RWPE1 (cell line): ENCODE measurements at regions of chr19 and their contacts with region 1.

Region 1: DNA sequence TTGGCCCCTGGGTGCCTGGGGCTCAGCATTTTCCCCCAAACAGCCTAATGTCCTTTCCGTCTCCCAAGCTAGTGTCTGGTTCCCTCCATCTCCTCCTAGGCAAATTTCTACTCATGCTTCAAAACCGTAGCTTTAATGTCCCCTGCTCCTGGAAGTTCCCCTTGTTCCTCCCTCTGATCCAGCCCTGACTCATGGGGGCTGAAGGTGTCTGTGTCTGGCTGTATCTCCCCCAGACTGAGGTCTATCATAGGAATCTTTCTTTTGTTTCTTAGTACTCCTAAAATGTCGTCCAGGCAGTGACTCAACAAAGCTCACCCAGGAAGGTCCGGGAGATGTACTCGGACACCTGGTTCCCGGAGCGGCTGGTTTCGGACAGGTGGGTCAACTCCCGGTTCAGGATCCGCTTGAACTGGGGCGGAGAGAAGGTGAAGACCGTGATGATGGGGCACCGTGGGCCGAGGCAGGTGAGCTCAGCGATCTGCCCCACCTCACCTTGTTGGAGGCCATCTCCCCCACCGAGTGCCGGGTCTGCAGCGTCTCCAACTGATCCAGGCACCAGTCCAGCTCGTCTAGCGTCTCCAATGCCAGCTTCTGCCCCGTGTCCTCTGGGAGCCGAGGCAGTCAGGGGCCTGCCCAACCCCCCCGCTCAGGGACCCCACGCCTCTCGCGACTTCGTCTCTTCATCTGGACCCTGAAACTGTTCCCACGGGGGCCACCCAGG is 6.2 kb downstream of the PDE4C start:
- DNase-seq: no peak
- H3K27ac ChIP-seq: no peak overlapping the region
- CTCF ChIP-seq: no peak

Region 2: GRCh38 chr19:18173572-18174288 is 46.3 kb before region 1 on chr19 and contains the start of gene IFI30:
- CTCF ChIA-PET with region 1: no interaction called
- POLR2A ChIA-PET with region 1: no interaction called
- DNase-seq: peak; percentile 80
- H3K27ac ChIP-seq: peak within 1 kb of the TSS; percentile 88
- CTCF ChIP-seq: no peak

Region 3: DNA sequence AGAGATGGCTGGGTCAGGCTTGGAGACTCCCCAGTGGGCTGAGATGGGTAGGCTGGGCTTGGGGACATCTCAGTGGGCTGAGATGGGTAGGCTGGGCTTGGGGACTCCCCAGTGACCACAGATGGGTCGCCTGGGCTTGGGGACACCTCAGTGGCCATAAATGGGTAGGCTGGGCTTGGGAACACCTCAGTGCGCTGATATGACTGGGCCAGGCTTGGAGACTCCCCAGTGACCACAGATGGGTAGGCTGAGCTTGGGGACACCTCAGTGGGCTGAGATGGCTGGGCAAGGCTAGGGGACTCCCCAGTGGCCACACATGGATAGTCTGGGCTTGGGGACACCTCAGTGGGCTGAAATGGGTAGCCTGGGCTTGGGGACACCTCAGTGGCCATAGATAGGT is 41.4 kb after region 1 on chr19:
- CTCF ChIA-PET with region 1: interaction called, 10 read pairs
- POLR2A ChIA-PET with region 1: no interaction called
- DNase-seq: no peak
- H3K27ac ChIP-seq: no peak overlapping the region
- CTCF ChIP-seq: no peak

Region 4: GRCh38 chr19:18620916-18621315 is 400.8 kb after region 1 on chr19:
- CTCF ChIA-PET with region 1: no interaction called
- POLR2A ChIA-PET with region 1: interaction called, 11 read pairs
- DNase-seq: no peak
- H3K27ac ChIP-seq: no peak overlapping the region
- CTCF ChIP-seq: no peak